Panc1 (cell line): ENCODE measurements at regions of chr16 and their contacts with region 1.

Region 1: DNA sequence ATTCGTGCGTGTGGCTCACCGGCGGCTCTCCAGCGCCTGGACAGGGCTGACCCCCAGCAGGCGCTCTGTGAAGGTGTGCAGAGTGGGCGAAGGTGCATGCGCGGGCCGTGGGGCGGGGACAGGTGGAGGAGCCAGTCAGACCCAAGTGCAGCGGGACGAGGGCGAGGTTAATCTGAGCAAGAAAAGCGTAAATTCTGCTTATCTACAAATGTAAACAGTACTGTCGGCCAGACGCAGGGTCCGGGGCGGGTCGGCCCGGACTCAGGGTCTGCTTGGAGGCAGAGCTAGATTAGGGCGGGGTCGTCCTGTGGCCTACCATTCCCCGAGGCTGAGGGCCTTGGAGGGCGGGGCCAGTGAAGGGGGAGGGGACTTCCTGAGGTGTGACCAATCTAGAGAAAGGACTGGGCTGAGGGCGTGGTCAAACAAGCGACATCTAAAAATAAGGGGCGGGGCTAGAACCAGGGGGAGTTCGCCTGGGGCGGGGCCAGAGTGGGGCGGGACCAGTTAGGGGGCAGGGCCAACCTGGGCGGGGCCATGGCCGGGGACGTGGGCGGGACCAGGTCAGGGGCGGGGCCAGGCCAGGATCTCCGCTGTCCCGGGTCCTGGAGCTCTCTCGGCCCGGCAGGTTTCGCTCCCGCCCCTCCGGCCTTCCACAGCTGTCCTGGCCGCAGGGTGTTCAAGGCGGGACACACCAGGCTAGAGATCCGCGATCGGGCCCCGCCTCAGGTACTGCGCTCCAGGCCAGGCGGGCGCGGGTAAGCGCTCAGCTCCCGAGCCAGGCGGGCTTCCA is at the start of gene SEC14L5:
- DNase-seq: peak; percentile 89
- ATAC-seq: peak; percentile 93
- H3K4me3 ChIP-seq: peak within 1 kb of the TSS; percentile 61 to 72
- H3K27ac ChIP-seq: peak within 1 kb of the TSS; percentile 25; the same call in 1 of the 2 replicates
- H3K4me1 ChIP-seq: peaks cover 26% of the 10 kb centered on the region
- H3K27me3 ChIP-seq: no peaks in the 10 kb centered on the region
- CTCF ChIP-seq: no peak
- total RNA-seq, gene SEC14L5: 0.26 TPM

Region 2: DNA sequence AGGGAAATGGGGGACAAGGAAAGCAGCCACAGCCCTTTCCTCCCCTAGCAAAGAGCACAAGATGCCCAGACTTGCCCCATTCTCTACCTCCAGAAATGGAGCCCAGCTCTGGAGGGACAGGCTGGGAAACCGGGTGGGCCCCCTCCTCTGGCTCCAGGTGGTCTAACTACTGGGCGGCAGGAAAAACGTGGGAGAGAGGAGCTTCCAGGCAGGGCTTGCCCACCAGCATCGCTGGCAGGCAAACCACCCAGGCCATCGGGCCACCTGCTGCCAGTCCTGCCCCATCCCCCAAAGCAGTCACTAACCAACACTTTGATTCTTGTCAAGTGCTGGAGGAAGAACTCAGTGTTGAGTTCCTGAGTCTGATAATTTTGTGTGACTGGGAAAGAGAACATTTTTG is 239.4 kb before region 1 on chr16:
- CTCF ChIA-PET with region 1: interaction called, 4 read pairs
- POLR2A ChIA-PET with region 1: no interaction called
- in situ Hi-C with region 1: no loop called
- intact Hi-C with region 1: loop called (anchors 5 kb)
- DNase-seq: no peak
- ATAC-seq: no peak
- H3K4me3 ChIP-seq: no peak overlapping the region
- H3K27ac ChIP-seq: no peak overlapping the region
- H3K4me1 ChIP-seq: no peaks in the 10 kb centered on the region
- H3K27me3 ChIP-seq: no peaks in the 10 kb centered on the region
- CTCF ChIP-seq: no peak

Region 3: DNA sequence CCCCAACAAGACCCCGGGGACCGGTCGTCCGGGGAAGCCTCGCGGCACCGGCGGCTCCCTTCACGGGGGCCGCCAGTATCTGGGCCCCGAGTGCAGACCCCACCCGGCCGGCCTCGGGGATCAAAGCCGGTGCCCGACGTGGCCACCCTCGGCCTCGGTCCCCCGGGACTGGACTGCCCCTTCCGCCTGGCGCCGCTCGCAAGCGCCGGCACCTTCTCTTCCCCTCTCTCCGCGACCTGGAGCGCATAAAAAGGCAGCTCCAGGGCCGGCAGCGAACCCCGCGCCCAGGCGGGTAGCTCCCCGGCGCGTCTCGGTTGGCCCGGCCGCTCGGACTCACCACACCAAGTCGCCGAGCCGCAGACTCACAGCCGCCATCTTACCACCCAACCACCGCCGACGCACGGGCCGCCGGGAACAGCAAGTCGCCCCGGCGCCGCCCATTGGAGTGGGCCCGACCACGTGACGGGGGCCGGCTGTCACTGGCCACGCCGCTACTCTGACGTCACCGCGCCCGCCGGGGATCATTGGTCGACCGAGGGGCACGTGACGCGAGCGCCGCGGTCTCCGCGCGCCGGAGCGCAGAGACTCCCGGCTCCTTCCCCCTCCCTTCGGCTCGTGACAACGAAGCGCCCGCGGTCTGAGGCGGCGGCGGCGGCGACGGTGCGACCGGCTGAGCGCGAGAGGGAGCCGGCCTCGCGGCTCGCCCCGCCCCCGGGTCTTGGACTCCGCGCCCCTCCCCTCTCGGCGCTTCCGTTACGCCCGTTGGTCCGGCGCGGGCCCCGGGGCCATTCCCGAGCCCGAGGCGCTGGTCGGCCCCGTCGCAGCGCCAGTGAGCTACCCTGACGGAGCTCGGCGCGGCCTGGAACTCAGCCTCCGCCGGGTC is 110.8 kb before region 1 on chr16 and contains the starts of genes GLYR1 and UBN1:
- CTCF ChIA-PET with region 1: interaction called, 3 read pairs
- POLR2A ChIA-PET with region 1: interaction called, 3 read pairs
- in situ Hi-C with region 1: no loop called
- intact Hi-C with region 1: loop called (anchors 10 kb)
- DNase-seq: peak; percentile 71
- ATAC-seq: peak; percentile 95
- H3K4me3 ChIP-seq: peak within 1 kb of the TSS; percentile 63 to 96
- H3K27ac ChIP-seq: peak within 1 kb of the TSS; percentile 84
- H3K4me1 ChIP-seq: peaks cover 22% of the 10 kb centered on the region
- H3K27me3 ChIP-seq: no peaks in the 10 kb centered on the region
- CTCF ChIP-seq: no peak
- total RNA-seq, gene GLYR1: 111 TPM
- total RNA-seq, gene UBN1: 63.1 TPM

Region 4: GRCh38 chr16:4882633-4883285 is 75.2 kb before region 1 on chr16:
- CTCF ChIA-PET with region 1: no interaction called
- POLR2A ChIA-PET with region 1: no interaction called
- in situ Hi-C with region 1: no loop called
- intact Hi-C with region 1: loop called (anchors 10 kb)
- DNase-seq: peak; percentile 38
- ATAC-seq: peak; percentile 71
- H3K4me3 ChIP-seq: no peak overlapping the region
- H3K27ac ChIP-seq: peak overlapping the region; percentile 42
- H3K4me1 ChIP-seq: peaks cover 15% of the 10 kb centered on the region; the same call in 1 of the 2 replicates
- H3K27me3 ChIP-seq: no peaks in the 10 kb centered on the region
- CTCF ChIP-seq: no peak